Right ventricle myocardium superior (tissue), 1 donor: ENCODE measurements at regions of chr18 and their contacts with region 1.

Region 1: DNA sequence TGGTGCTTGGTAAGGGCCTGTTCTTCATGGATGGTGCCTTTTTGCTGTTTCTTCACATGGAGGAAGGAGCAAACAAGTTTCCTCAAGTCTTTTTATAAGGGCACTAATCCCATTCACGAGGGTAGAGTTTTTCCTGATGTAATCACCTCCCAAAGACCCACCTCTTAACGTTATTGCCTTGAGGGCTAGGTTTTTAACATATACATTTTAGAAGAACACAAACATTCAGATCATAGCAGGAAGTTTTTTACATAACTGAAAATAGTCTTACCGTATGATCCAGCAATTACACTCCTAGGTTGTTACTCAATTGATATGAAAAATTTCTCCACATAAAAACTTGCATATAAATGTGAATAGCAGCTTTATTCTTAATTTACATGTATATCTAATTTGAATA is 976.3 kb downstream of the DSC3 start:
- DNase-seq: no peak
- ATAC-seq: no peak

Region 2: DNA sequence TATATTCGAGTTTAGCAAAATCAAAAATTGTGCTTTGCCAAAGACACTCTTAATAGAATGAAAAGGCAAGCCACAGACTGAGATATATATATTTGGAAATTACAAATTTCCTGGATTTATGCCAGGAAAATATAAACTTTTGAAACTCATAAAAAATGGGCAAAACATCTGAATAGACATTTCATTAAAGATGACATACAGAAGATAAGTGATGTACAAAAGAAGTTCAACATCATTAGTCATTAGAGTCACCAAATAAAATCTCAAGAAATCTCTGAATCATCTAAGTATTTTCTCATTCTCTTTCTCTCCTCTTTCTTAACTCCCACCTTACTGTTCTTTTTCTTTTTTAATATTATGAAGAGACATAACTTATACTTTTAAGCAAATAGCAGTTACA is 55.1 kb after region 1 on chr18:
- intact Hi-C with region 1: loop called (anchors 10 kb)
- DNase-seq: no peak
- ATAC-seq: no peak